T-cell (primary cell): ENCODE measurements at regions of chr7 and their contacts with region 1.

Region 1: GRCh38 chr7:139416405-139416804 is 56.7 kb downstream of the LUC7L2 start:
- DNase-seq: no peak
- ATAC-seq: no peak
- H3K4me3 ChIP-seq: no peak overlapping the region
- H3K4me3 Mint-ChIP-seq: no peak overlapping the region
- H3K27ac ChIP-seq: no peak overlapping the region
- H3K27ac Mint-ChIP-seq: no peak overlapping the region
- H3K4me1 ChIP-seq: no peaks in the 10 kb centered on the region
- H3K4me1 Mint-ChIP-seq: no peaks in the 10 kb centered on the region
- H3K27me3 ChIP-seq: no peaks in the 10 kb centered on the region
- H3K27me3 Mint-ChIP-seq: no peaks in the 10 kb centered on the region

Region 2: DNA sequence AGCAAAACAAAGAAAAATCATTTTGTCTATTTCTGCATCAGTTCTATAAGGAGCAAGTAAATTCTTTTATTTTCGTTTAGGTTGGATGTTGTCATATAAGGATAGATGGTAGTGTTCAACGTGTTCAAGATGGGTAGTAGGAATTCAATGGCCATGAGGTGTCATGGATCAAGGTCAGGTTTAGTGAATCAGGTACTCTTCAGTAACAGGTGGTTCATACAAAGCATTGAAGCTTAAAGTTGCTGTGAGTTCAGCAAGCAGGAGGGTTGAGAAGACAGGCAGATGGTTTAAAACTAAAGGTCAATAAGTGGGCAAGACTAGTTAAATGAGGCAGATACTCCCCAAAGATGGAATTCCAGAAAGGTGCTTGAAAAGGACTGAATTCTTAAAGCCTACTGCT is 51.1 kb before region 1 on chr7:
- CTCF ChIA-PET with region 1: no interaction called
- POLR2A ChIA-PET with region 1: interaction called, 4 to 10 read pairs
- DNase-seq: no peak
- ATAC-seq: no peak
- H3K4me3 ChIP-seq: no peak overlapping the region
- H3K4me3 Mint-ChIP-seq: peak overlapping the region in 1 of 3 donors; percentile 3
- H3K27ac ChIP-seq: no peak overlapping the region
- H3K27ac Mint-ChIP-seq: peak overlapping the region in 1 of 2 donors; percentile 4
- H3K4me1 ChIP-seq: peaks cover 21 to 28% of the 10 kb centered on the region in 2 experiments
- H3K4me1 Mint-ChIP-seq: peaks cover 80 to 83% (median 81%) of the 10 kb centered on the region in 3 donors
- H3K27me3 ChIP-seq: no peaks in the 10 kb centered on the region
- H3K27me3 Mint-ChIP-seq: no peaks in the 10 kb centered on the region

Region 3: DNA sequence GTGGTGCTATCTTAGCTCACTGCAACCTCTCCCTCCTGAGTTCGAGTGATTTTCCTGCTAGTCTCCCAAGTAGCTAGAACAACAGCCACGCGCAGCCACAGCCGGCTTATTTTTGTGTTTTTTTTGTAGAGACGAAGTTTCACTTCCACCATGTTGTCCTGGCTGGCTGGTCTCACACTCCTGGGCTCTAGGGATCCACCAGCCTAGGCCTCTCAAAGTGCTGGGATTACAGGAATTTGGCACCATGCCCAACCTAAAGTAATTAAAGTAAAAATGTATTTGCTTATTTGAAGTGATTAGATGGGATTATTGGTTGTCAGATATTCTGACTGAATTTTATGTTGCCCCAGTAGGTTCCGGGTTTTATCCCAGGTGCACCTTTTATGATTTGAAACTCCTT is 34.0 kb before region 1 on chr7:
- CTCF ChIA-PET with region 1: no interaction called
- POLR2A ChIA-PET with region 1: no interaction called
- DNase-seq: no peak
- ATAC-seq: no peak
- H3K4me3 ChIP-seq: no peak overlapping the region
- H3K4me3 Mint-ChIP-seq: no peak overlapping the region
- H3K27ac ChIP-seq: no peak overlapping the region
- H3K27ac Mint-ChIP-seq: no peak overlapping the region
- H3K4me1 ChIP-seq: no peaks in the 10 kb centered on the region
- H3K4me1 Mint-ChIP-seq: peaks cover 0 to 2% (median 0%) of the 10 kb centered on the region in 3 donors
- H3K27me3 ChIP-seq: no peaks in the 10 kb centered on the region
- H3K27me3 Mint-ChIP-seq: no peaks in the 10 kb centered on the region

Region 4: GRCh38 chr7:140439359-140439758 is 1023.0 kb after region 1 on chr7:
- CTCF ChIA-PET with region 1: interaction called in 1 of 2 experiments, 10 read pairs
- POLR2A ChIA-PET with region 1: no interaction called
- DNase-seq: no peak
- ATAC-seq: no peak
- H3K4me3 ChIP-seq: no peak overlapping the region
- H3K4me3 Mint-ChIP-seq: no peak overlapping the region
- H3K27ac ChIP-seq: no peak overlapping the region
- H3K27ac Mint-ChIP-seq: no peak overlapping the region
- H3K4me1 ChIP-seq: no peaks in the 10 kb centered on the region
- H3K4me1 Mint-ChIP-seq: peaks cover 0 to 1% (median 0%) of the 10 kb centered on the region in 3 donors
- H3K27me3 ChIP-seq: peaks cover 0 to 7% of the 10 kb centered on the region in 2 experiments
- H3K27me3 Mint-ChIP-seq: peaks cover 0 to 2% of the 10 kb centered on the region in 2 donors